ACHN (cell line): ENCODE measurements at regions of chr2 and their contacts with region 1.

Region 1: DNA sequence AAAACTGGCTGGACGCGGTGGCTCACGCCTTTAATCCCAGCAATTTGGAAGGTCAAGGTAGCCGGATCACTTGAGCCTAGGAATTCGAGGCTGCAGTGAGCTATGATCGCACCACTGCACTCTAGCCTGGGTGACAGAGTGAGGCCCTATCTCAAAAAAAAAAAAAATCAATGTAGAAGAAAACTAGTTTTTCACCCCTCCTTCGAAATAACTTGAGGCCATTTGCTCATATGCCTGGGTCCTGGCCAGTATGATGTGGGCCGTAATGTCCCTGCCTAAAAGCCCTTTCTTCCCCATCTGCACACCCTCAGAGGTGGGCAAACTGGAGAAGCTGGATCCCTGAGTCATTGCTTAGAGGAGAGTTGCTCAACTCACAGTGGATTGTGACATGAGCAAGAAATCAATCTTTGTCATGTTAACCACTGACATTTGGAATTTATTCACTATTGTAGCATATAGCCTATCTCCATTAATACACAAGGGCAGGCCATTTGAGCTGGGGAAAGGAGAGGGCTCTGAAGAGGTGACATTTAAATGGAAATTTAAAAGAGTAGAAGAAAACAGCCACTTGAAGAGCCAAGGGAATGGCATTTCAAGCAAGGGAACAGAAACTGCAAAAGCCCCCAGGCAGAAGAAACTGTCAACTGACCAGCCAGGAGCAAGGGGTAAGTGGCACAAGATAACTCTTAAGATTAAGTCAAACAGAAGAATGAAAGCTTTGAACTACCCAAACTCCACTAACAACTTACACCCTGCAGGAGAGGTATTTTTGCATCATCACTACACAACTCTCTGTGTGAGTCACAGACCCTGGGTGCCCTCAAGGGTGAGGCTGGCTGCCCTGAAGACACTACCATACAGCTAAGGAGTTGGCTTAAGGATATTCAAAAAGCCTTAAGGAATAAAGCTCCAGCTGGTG is 7.6 kb upstream of the METTL21A start:
- DNase-seq: peak; percentile 89

Region 2: DNA sequence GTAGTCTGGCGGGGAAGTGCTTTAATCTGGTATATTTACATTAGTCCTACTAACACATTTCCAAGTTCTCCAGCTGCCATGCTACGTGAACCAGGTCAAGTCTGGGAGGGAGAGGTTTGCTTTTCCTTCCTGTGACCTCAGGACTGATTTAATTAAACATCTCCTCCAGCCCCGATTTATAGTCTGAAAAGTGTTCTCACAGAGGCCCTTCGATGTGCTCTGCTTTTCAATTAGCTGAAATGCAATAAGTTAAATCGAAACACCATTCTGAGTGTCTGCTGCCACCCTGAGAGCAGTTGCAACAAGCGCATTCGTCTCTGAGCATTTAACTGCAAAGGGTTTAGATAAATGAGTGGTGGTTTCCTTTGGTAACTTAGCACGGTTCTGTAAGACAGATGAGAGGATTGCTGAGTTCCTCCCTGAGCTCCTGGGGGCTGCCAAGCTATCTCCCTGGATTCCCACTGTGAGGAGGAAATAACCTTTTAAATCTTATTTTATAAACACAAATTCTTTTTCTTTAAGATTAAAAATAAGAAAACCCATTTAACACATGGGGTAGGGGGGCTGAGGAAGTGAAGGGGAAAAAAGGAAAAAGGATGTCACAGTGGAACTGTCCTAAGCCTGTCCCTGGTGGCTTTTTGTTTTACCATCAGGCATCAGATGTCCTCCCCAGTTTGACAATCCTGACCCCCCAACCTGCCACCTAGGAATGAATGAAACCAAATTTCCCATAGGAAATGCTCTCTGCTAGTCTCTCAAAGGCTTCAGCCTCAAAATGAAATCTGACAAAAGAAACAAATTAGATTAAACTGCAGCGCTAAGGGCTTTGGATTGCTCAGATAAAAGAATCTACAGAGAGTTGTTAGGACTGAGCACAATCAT is 159.5 kb before region 1 on chr2:
- in situ Hi-C with region 1: no loop called
- DNase-seq: peak; percentile 67

Region 3: DNA sequence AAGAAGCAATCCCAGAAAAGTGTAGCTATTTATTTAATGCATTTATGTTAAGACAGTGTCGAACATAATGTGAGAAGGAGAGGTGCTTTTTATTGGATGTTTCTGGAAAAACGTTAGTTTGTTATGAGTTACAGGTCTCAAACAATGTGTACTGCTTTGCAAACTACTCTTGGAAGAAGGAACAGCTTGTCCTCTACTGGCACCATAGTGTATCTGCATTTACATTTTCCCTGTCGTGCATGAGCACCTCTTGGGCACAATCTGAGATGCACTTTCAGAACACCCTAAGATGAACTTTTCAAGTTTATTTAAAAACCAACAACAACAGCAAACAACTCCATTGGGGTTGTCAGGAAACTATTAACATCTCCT is 101.4 kb after region 1 on chr2:
- in situ Hi-C with region 1: loop called (anchors 10 kb)
- DNase-seq: peak; percentile 73